ENCODE measurements at regions of chr2 and their contacts with region 1.

Region 1: DNA sequence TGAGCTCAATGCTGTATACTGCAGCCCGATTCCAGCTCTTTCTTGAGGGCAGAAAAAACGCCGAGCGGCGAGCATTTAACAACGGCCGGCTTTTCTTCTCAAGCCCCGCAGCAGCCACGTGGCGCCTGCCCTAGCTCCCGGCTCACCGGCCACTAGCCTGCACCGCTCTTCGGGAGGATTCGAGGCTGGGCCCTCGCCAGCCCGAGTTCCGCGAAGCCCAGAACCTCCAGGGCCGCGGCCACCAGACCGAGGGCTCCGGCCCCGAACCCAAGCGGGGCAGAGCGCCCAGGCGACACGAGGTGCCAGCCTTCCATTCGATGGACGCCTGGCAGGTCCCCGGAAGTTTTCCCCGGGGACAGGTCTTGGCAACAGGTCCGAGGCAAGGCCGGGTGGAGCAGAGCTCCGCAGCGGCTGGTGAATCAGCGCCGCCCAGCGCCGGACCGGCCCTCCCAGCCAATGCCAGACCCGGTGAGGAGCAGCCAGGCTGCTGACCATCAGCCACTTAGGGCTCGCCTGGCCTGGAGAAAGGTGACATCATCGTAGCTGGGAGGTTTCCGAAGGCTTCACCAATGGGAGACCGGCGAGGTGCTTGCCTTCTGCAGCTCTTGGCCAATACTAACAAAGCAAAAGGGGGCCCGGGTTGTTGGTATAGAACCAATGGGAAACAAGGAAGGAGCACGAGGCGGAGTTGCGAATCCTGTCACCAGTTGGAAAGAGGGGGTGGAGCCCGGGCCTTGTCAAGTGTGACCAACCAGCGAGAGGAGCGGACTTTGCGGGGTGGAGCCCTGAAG is 544 bp upstream of the MXD1 start:
- DNase-seq: no peak
- ATAC-seq: peak; percentile 91
- H3K4me3 Mint-ChIP-seq: peak overlapping the region; percentile 87
- H3K27ac Mint-ChIP-seq: peak overlapping the region; percentile 91
- H3K4me1 Mint-ChIP-seq: peaks cover 41% of the 10 kb centered on the region
- H3K27me3 Mint-ChIP-seq: no peaks in the 10 kb centered on the region
- CTCF ChIP-seq: no peak

Region 2: GRCh38 chr2:69306822-69307578 is 607.4 kb before region 1 on chr2:
- CTCF ChIA-PET with region 1: no interaction called
- POLR2A ChIA-PET with region 1: no interaction called
- intact Hi-C with region 1: no loop called
- DNase-seq: peak; percentile 70
- ATAC-seq: peak; percentile 92
- H3K4me3 Mint-ChIP-seq: peak overlapping the region; percentile 81
- H3K27ac Mint-ChIP-seq: no peak overlapping the region
- H3K4me1 Mint-ChIP-seq: peaks cover 33% of the 10 kb centered on the region
- H3K27me3 Mint-ChIP-seq: peaks cover 26% of the 10 kb centered on the region
- CTCF ChIP-seq: no peak

Region 3: DNA sequence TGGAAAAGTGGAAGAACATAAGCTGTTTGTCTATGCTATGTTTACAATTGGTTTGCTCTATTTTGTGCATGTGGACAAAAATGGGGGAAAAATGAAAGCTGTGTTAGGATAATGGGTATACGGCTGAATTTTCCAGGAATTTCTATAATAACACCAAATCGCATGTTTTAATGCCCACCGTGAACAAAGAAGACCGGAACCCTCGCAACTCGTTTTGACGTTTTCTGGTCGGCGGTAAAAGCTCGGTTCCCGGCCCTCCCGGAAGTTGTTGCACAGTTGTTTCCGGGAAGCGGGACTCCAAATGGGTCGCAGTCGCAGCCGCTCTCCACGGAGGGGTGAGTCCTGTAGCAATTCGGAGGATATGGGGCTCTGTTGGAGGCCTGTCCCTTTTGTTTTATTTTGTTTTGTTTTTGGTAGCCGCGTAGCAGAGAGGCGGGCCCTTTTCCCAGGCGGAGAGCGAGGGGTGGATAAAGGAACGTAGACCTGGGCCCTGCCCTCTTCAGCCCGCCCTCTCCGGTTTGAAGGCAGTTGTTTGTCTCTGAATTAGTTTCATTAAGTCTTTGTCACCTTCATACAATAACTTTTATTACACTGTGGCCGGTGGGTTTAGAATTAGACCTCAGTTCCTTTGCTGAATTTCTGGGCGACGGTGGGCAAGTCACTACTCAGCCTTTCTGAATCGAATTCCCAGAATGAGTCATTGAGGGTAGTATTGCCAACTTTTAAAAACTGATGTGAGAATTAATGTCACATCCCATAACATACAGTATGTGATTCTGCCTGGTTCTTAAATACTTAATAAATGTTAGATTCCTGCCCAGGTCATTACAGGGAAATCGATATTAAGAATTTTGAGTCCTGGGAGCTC is 20.4 kb before region 1 on chr2 and contains the start of gene SNRNP27:
- CTCF ChIA-PET with region 1: interaction called, 3 read pairs
- POLR2A ChIA-PET with region 1: interaction called, 30 read pairs
- intact Hi-C with region 1: loop called (anchors 1 kb)
- DNase-seq: peak; percentile 69
- ATAC-seq: peak; percentile 88
- H3K4me3 Mint-ChIP-seq: peak within 1 kb of the TSS; percentile 100
- H3K27ac Mint-ChIP-seq: peak within 1 kb of the TSS; percentile 98
- H3K4me1 Mint-ChIP-seq: peaks cover 43% of the 10 kb centered on the region
- H3K27me3 Mint-ChIP-seq: no peaks in the 10 kb centered on the region
- CTCF ChIP-seq: no peak
- total RNA-seq, gene SNRNP27: 43.0 and 49.1 TPM in 2 replicates

Region 4: DNA sequence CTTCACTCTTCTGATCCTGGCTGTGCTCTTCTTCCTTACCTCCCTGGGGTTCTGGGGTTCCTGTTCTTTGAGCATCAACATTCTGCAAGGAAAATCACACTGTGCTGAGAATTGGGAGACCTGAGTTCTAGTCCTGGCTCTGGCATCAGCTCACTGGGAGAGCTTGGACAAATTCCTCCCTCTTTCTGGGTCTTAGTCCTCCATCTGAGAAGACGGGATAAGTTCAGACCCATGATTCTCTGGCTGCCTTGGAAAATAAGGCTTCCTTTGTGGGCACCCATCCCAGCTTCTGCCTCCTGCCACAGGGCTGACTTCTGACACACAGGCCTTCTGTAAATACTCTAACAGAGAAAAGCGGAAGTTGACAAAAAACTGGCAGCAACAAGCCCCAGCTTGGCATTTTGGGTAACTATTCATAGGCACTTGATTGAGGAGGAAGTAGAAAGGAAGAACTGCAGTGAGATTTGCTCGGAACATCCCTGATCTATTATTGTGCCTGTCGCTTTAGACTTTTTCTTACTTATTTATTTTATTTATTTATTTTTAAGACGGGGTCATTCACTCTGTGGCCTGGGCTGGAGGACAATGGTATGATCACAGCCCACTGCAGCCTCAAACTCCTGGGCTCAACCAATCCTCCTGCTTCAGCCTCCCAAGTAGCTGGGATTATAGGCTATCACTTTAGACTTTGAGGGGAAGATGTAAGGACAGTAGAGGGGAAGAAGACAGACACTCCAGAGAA is 180.8 kb after region 1 on chr2:
- CTCF ChIA-PET with region 1: no interaction called
- POLR2A ChIA-PET with region 1: interaction called, 192 read pairs
- intact Hi-C with region 1: no loop called
- DNase-seq: peak; percentile 36
- ATAC-seq: peak; percentile 95
- H3K4me3 Mint-ChIP-seq: peak overlapping the region; percentile 84
- H3K27ac Mint-ChIP-seq: peak overlapping the region; percentile 97
- H3K4me1 Mint-ChIP-seq: peaks cover 54% of the 10 kb centered on the region
- H3K27me3 Mint-ChIP-seq: no peaks in the 10 kb centered on the region
- CTCF ChIP-seq: no peak

Region 5: GRCh38 chr2:70142590-70143313 is 228.4 kb after region 1 on chr2:
- CTCF ChIA-PET with region 1: interaction called, 62 read pairs
- POLR2A ChIA-PET with region 1: interaction called, 195 read pairs
- intact Hi-C with region 1: loop called (anchors 1 kb)
- DNase-seq: peak; percentile 100
- ATAC-seq: peak; percentile 70
- H3K4me3 Mint-ChIP-seq: peak overlapping the region; percentile 86
- H3K27ac Mint-ChIP-seq: peak overlapping the region; percentile 100
- H3K4me1 Mint-ChIP-seq: peaks cover 37% of the 10 kb centered on the region
- H3K27me3 Mint-ChIP-seq: no peaks in the 10 kb centered on the region
- CTCF ChIP-seq: no peak

Region 6: GRCh38 chr2:70258532-70258874 is 344.1 kb after region 1 on chr2:
- CTCF ChIA-PET with region 1: interaction called, 7 read pairs
- POLR2A ChIA-PET with region 1: interaction called, 21 read pairs
- intact Hi-C with region 1: no loop called
- DNase-seq: no peak
- ATAC-seq: no peak
- H3K4me3 Mint-ChIP-seq: peak overlapping the region; percentile 93
- H3K27ac Mint-ChIP-seq: peak overlapping the region; percentile 12
- H3K4me1 Mint-ChIP-seq: peaks cover 13% of the 10 kb centered on the region
- H3K27me3 Mint-ChIP-seq: no peaks in the 10 kb centered on the region
- CTCF ChIP-seq: no peak

Region 7: DNA sequence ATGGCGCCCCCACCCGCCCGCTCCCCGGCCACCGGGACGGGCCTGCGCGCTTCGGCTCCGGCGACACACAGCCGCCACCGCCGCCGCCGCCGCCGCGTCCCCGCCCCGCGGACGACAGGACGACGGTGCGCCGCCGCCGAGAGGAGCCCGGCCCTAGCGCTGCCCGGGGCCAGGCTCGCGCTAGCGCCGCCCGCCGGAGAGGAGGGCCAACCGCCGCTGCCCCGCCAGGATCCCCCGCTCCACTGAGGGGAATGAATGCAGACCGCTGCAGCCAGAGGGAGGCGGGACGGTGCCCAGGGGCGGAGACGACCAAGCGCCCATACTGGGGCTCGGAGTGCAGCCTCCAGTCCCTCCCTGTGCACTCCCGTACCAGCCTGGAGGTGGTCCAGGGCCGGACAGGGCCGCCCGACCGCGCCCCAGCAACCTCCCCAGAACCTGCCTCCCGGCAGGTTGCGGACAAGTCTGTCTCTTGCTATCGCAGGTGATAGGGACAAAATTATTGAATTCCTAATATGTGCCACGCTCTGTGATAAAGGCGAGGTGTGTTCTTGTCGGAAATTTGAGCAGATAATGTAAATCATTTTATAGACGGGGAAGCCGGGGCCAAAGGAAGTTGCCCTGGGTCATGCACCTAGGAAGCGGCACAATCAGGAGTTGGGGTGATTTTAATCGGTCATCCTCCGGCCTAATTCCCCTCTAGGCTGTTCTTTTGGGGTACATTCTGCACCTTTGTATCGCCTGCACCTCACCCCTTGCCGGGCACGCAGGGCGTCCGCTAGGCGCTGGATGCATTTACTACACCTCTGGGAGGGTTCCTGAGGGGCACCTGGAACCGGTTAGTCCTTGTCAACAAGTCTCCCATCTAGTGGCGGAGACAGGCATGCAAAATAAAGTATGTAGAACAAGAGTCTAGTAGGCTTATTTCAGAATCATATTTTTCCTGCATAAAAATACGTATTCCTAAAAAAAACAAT is 1080.7 kb after region 1 on chr2 and contains the start of gene TEX261:
- CTCF ChIA-PET with region 1: no interaction called
- POLR2A ChIA-PET with region 1: no interaction called
- intact Hi-C with region 1: loop called (anchors 10 kb)
- DNase-seq: peak; percentile 96
- ATAC-seq: peak; percentile 96
- H3K4me3 Mint-ChIP-seq: peak within 1 kb of the TSS; percentile 96
- H3K27ac Mint-ChIP-seq: peak within 1 kb of the TSS; percentile 87
- H3K4me1 Mint-ChIP-seq: peaks cover 33% of the 10 kb centered on the region
- H3K27me3 Mint-ChIP-seq: no peaks in the 10 kb centered on the region
- CTCF ChIP-seq: no peak
- total RNA-seq, gene TEX261: 46.8 and 54.1 TPM in 2 replicates